ENCODE measurements at regions of chr9 and their contacts with region 1.

Region 1: GRCh38 chr9:126822278-126822677 is 17.4 kb downstream of the ZBTB43 start:
- DNase-seq: no peak
- ATAC-seq: no peak
- H3K4me3 ChIP-seq: no peak overlapping the region
- H3K27ac ChIP-seq: no peak overlapping the region
- H3K4me1 ChIP-seq: no peaks in the 10 kb centered on the region
- H3K27me3 ChIP-seq: no peaks in the 10 kb centered on the region
- CTCF ChIP-seq: no peak
- POLR2A ChIP-seq: no peak
- RAD21 ChIP-seq: no peak

Region 2: GRCh38 chr9:126217797-126218196 is 604.5 kb before region 1 on chr9:
- CTCF ChIA-PET with region 1: no interaction called
- POLR2A ChIA-PET with region 1: interaction called, 14 read pairs
- dilution Hi-C with region 1: no loop called
- in situ Hi-C with region 1: no loop called
- intact Hi-C with region 1: no loop called
- DNase-seq: no peak
- ATAC-seq: no peak
- H3K4me3 ChIP-seq: no peak overlapping the region
- H3K27ac ChIP-seq: no peak overlapping the region
- H3K4me1 ChIP-seq: no peaks in the 10 kb centered on the region
- H3K27me3 ChIP-seq: peaks cover 45% of the 10 kb centered on the region
- CTCF ChIP-seq: no peak
- POLR2A ChIP-seq: no peak
- RAD21 ChIP-seq: no peak

Region 3: DNA sequence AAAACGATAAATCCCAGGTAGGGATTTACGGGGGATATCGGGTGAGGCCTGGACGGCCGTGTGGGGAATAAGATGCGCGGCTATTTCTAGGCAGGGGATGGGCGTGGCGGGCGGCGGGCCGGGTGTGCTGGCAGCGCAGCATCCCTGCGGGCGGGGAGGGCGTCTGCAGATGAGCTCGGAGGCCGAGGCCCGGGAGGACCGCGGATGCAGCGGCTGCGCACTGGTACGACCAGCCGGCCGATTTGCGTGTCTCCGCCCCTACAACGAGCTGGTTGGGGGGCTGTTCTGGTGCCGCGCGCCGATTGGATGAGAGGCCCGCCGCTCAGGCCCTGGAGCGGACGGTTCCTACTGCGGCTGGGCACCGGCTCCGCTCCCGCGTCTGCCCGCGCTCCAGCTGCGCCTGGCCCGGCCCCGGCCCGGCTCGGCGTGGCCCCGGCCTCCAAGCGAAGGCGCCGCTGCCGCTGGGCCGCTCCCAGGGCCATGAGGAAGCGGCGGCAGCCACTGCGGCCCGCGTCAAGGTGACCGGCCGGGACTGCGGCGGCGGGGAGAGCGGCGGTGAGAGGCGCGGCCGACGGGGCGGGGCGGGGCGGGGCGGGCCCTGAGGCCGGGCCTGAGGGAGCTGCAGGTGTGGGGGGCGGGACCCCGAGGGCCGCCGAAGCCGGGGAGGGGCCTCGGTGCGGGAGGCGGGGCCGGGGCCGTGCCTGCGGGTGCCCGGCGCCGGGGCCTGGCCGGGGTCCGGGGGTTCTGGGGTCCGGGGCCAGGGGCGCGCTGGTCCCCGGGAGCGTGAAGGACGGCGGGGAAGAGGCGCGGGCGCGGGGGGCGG is 92.4 kb after region 1 on chr9 and contains the start of gene RALGPS1:
- CTCF ChIA-PET with region 1: no interaction called
- POLR2A ChIA-PET with region 1: no interaction called
- dilution Hi-C with region 1: no loop called
- in situ Hi-C with region 1: no loop called
- intact Hi-C with region 1: no loop called
- DNase-seq: peak; percentile 94
- ATAC-seq: peak; percentile 100
- H3K4me3 ChIP-seq: peak within 1 kb of the TSS; percentile 81
- H3K27ac ChIP-seq: no peak within 1 kb of the TSS; the same call in 1 of the 2 replicates
- H3K4me1 ChIP-seq: peaks cover 3% of the 10 kb centered on the region; the same call in 1 of the 2 replicates
- H3K27me3 ChIP-seq: peaks cover 4% of the 10 kb centered on the region; the same call in 1 of the 2 replicates
- CTCF ChIP-seq: no peak
- POLR2A ChIP-seq: no peak
- RAD21 ChIP-seq: no peak
- total RNA-seq, gene RALGPS1: 0.90 and 2.5 TPM in 2 replicates